PC-9 (cell line): ENCODE measurements at regions of chr5 and their contacts with region 1.

Region 1: GRCh38 chr5:37412515-37413277 is 33.6 kb downstream of the WDR70 start:
- DNase-seq: peak; percentile 72 to 79
- H3K4me3 ChIP-seq: no peak overlapping the region
- H3K27ac ChIP-seq: no peak overlapping the region
- H3K4me1 ChIP-seq: no peaks in the 10 kb centered on the region
- H3K27me3 ChIP-seq: no peaks in the 10 kb centered on the region
- CTCF ChIP-seq: peak; percentile 99

Region 2: DNA sequence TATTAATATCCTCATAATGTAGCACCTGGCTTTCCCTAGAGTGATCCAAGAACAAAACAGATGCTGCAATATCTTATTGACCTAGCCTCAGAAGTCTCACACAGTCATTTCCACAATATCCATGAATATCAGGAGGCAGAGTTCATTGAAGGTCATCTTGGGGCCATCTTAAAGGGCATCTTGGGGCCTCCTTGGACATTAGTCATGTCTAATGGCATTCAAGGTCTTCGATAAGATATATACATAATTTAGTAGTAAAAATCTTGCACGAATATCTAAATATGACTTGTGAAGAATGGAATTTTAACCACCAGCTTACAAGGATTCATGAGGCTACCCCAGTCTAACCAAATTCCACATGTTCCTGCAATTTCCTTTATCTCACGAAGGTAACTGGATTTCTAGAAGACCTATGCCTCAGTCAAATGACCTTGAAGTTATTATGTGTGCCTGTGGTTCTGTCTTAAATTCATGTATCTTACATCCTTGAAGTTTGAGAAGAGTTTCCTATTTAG is 1958.6 kb before region 1 on chr5:
- CTCF ChIA-PET with region 1: interaction called, 19 read pairs
- POLR2A ChIA-PET with region 1: no interaction called
- intact Hi-C with region 1: no loop called
- DNase-seq: no peak
- H3K4me3 ChIP-seq: no peak overlapping the region
- H3K27ac ChIP-seq: no peak overlapping the region
- H3K4me1 ChIP-seq: no peaks in the 10 kb centered on the region
- H3K27me3 ChIP-seq: no peaks in the 10 kb centered on the region
- CTCF ChIP-seq: no peak

Region 3: GRCh38 chr5:37837414-37838032 is 424.8 kb after region 1 on chr5:
- CTCF ChIA-PET with region 1: no interaction called
- POLR2A ChIA-PET with region 1: no interaction called
- intact Hi-C with region 1: loop called (anchors 1 kb)
- DNase-seq: peak in 1 of 2 experiments; percentile 80
- H3K4me3 ChIP-seq: no peak overlapping the region
- H3K27ac ChIP-seq: no peak overlapping the region
- H3K4me1 ChIP-seq: no peaks in the 10 kb centered on the region
- H3K27me3 ChIP-seq: peaks cover 13% of the 10 kb centered on the region; the same call in 1 of the 2 replicates
- CTCF ChIP-seq: peak; percentile 77